Psoas muscle (tissue), 8 donors: ENCODE measurements at regions of chr22 and their contacts with region 1.

Region 1: DNA sequence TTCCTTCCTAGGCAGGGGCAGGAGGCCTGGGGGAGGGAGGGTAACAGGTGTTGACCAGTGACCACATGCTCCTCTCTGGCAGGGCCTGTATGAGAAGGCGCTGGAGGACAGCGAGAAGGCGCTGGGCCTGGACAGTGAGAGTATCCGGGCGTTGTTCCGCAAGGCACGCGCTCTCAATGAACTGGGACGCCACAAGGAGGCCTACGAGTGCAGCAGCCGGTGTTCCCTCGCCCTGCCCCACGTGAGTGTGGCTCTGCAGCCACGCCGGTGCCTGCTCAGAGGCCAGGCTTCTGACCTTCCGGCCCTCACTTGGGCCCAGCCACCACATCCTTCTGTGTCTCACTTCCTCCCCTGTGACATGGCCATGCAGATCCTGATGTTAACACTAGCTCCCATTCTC is 25.8 kb downstream of the ZC3H7B start:
- DNase-seq: peak; percentile 68 to 95
- ATAC-seq: peak; percentile 94 to 97 (median 96)
- H3K4me3 ChIP-seq: no peak overlapping the region
- H3K27ac ChIP-seq: peak overlapping the region; percentile 92
- H3K4me1 ChIP-seq: peaks cover 8% of the 10 kb centered on the region
- H3K27me3 ChIP-seq: no peaks in the 10 kb centered on the region
- CTCF ChIP-seq: peak; percentile 38

Region 2: DNA sequence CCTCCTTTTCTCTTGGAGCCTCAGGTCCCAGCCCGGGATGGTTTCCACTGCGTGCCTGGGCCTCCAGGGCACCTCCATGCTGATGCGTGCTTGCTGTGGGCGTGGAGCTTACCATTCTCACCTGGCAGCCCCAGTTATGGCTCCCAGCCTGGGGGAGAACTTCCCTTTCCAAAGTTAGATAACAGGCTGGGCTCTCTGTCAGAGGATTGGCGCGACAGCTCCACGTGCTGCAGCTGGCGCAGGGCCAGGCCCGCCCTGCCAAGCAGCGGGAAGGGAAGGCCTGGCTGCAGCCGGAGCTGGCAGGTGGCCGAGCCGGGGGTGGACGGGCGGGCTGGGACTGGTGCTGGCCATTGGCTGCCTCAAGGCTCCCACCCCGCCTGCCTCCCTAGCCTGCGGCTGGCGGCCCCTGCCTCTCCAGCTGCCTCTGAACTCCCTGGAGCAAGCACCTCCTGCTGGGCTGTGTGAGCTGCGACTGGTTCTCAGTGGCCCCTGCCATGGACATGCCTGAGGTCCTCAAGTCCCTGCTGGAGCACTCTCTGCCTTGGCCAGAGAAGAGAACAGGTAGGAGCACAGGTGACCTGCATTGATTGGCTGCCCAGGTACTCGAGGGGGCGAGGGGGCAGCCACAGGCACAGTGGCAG is 40.0 kb after region 1 on chr22:
- intact Hi-C with region 1: loop called in 1 of 2 experiments (anchors 1 kb)
- DNase-seq: peak; percentile 98 to 99
- ATAC-seq: peak; percentile 90 to 94 (median 92)
- H3K4me3 ChIP-seq: peak overlapping the region; percentile 59
- H3K27ac ChIP-seq: peak overlapping the region; percentile 77
- H3K4me1 ChIP-seq: peaks cover 42% of the 10 kb centered on the region
- H3K27me3 ChIP-seq: no peaks in the 10 kb centered on the region
- CTCF ChIP-seq: peak; percentile 39

Region 3: GRCh38 chr22:41526837-41527799 is 200.0 kb after region 1 on chr22:
- intact Hi-C with region 1: loop called in 1 of 2 experiments (anchors 10 kb)
- DNase-seq: peak; percentile 60 to 84
- ATAC-seq: peak; percentile 49 to 67 (median 60)
- H3K4me3 ChIP-seq: no peak overlapping the region
- H3K27ac ChIP-seq: peak overlapping the region; percentile 54
- H3K4me1 ChIP-seq: peaks cover 27% of the 10 kb centered on the region
- H3K27me3 ChIP-seq: no peaks in the 10 kb centered on the region
- CTCF ChIP-seq: peak; percentile 86